ENCODE measurements at regions of chr6 and their contacts with region 1.

Region 1: GRCh38 chr6:50128420-50129005 is 78.8 kb upstream of the DEFB112 start:
- DNase-seq: peak in 1 of 2 donors; percentile 31
- H3K4me3 ChIP-seq: no peak overlapping the region
- H3K27ac ChIP-seq: no peak overlapping the region
- H3K4me1 ChIP-seq: no peaks in the 10 kb centered on the region
- H3K27me3 ChIP-seq: peaks cover 0 to 5% (median 0%) of the 10 kb centered on the region in 3 donors
- CTCF ChIP-seq: peak in 2 of 7 experiments; percentile 18 to 47
- EP300 ChIP-seq: no peak
- POLR2A ChIP-seq: no peak

Region 2: DNA sequence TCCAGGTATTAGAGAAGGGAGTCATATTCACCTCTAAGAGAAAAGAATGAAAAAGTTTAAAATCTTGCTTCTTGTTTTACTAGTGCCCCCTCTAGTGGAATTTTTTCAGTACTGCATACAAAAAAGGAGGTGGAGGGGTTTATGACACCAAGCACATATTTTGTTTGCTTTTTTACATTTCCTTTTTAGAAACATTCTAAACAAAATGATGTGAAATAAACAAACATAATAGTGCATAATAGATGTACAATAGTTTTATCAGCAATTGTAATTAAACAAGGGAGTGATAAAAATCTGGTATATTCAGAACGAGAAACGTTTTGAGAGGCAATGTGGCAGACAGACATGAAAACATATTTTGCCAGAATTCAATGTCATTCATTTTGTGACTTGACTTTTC is 473.8 kb after region 1 on chr6:
- intact Hi-C with region 1: loop called (anchors 10 kb)
- DNase-seq: peak in 1 of 2 donors; percentile 47
- H3K4me3 ChIP-seq: no peak overlapping the region
- H3K27ac ChIP-seq: no peak overlapping the region
- H3K4me1 ChIP-seq: no peaks in the 10 kb centered on the region
- H3K27me3 ChIP-seq: no peaks in the 10 kb centered on the region
- CTCF ChIP-seq: peak in 4 of 7 experiments; percentile 52 to 80 (median 68)
- EP300 ChIP-seq: no peak
- POLR2A ChIP-seq: no peak